Heart right ventricle (tissue), 16 donors: ENCODE measurements at regions of chr10 and their contacts with region 1.

Region 1: GRCh38 chr10:112949875-112950507 is at the start of gene TCF7L2:
- DNase-seq: peak; percentile 94 to 98
- ATAC-seq: peak; percentile 89 to 96 (median 95)
- H3K4me3 ChIP-seq: peak within 1 kb of the TSS; percentile 62 to 90 (median 80)
- H3K27ac ChIP-seq: peak within 1 kb of the TSS; percentile 84 to 97 (median 90)
- H3K4me1 ChIP-seq: peaks cover 4 to 44% (median 18%) of the 10 kb centered on the region in 9 donors
- H3K27me3 ChIP-seq: peaks cover 0 to 22% (median 0%) of the 10 kb centered on the region in 7 donors
- CTCF ChIP-seq: no peak
- total RNA-seq, gene TCF7L2: 9.9 to 15.8 (median 12.0) TPM

Region 2: DNA sequence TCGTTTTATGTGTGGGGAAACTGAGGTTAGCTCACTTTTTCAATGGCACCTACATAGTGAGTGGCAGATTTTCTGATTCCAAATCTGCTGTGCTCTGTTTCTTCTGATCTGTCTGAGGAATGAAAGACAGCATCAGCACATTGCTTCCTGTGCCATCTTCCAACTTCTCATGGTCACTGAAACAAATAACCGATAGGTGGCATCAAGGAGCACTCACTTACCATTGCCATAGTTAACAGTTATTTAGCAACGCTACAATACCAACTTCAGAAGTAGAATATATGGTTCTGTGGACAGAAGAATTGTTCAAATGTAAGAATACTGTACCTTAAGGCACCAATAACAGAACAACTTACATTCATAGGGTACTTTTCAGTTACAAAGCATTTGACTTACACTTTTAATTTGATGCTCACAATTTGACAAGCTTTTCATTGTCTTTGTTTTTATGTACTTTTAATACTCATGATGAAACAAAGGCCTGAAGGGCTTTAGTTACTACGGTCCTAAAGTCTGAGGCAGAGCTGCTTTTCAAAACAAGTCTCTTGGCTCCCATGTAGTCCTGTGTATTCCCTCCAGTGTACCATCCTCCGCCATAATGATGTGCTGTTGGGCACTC is 228.8 kb before region 1 on chr10:
- intact Hi-C with region 1: loop called in 1 of 10 experiments (anchors 10 kb)
- DNase-seq: peak in 1 of 2 donors; percentile 34
- ATAC-seq: peak in 6 of 8 donors; percentile 29 to 59 (median 54)
- H3K4me3 ChIP-seq: no peak overlapping the region
- H3K27ac ChIP-seq: no peak overlapping the region
- H3K4me1 ChIP-seq: peaks cover 0 to 5% (median 0%) of the 10 kb centered on the region in 9 donors
- H3K27me3 ChIP-seq: no peaks in the 10 kb centered on the region
- CTCF ChIP-seq: peak; percentile 39 to 83 (median 71)

Region 3: DNA sequence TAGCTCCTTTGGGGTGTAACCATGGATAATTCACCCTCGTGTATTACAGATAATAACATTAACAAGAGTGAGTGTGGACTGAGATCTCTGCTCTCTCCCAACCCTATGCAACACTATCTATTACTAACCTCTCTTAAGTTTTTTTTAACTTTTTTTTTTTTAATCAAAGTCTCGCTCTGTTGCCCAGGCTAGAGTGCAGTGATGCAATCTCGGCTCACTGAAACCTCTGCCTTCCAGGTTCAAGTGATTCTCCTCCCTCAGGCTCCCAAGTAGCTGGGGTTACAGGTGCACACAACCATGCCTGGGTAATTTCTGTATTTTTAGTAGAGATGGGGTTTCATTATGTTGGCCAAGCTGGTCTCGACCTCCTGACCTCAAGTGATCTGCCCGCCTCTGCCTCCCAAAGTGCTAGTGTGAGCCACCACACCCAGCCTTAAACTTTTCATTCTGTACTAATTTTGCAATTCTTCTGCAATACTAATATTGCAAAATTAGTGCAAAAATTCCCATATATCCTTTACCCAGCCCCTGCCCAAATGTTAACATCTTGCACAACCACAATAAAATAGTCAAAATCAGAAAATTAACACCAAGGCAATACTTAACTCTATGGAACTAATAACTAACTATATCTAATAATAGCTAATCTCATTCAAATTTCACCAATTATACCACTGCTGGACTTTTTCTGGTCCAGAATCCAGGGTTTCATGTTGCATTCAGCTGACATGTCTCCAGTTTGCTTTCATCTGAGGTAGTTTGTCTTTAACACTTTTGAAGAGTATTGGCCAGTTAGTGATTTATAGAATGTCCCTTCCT is 66.4 kb before region 1 on chr10:
- intact Hi-C with region 1: no loop called
- DNase-seq: no peak
- ATAC-seq: no peak
- H3K4me3 ChIP-seq: no peak overlapping the region
- H3K27ac ChIP-seq: no peak overlapping the region
- H3K4me1 ChIP-seq: no peaks in the 10 kb centered on the region
- H3K27me3 ChIP-seq: no peaks in the 10 kb centered on the region
- CTCF ChIP-seq: no peak

Region 4: DNA sequence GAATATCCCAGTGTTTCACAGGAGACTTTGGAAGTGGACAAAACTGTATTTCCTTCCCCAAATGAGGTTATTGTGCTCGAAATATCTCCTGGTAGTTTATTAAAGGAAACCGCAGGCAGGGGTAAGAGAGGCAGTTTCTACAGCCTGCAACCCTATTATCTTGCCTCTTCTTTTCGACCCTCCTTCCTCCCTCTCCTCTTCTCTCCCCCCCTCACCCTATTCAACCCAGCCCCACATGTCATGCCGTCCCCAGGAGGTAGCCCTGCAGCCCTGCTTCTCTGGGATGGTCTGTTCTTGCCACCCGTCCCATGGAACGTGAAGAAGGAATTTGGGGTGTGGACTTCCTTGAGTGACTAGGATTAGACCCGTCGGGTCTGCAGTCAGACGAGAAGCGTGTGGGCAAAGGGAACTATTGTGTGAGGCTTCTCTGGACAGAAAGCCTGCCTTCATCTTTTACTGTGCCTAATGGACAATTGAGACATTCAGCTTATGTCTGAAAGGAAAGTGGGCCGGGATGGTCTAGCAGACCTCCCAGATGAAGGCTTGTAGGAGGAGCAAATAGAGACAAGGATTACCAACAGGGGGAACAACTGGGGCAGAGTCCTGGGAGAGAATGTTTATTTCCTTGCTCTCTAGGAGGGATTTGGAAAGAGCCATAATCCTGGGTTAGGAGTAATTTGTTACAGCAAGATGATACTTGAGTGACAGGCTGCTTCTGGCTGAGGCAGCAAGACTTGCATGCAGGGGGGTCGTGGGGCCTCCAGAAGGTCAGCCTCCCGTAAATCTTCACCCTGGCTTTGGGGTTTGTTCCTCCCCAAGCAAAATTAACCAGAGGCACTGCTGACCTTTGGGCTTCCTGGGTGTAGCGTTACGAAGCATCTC is 77.8 kb after region 1 on chr10:
- intact Hi-C with region 1: loop called in 1 of 10 experiments (anchors 5 kb)
- DNase-seq: no peak
- ATAC-seq: peak; percentile 44 to 65 (median 53)
- H3K4me3 ChIP-seq: peak overlapping the region in 2 of 10 donors; percentile 16 to 26
- H3K27ac ChIP-seq: peak overlapping the region in 8 of 10 donors; percentile 14 to 82 (median 52)
- H3K4me1 ChIP-seq: peaks cover 12 to 52% (median 36%) of the 10 kb centered on the region in 9 donors
- H3K27me3 ChIP-seq: no peaks in the 10 kb centered on the region
- CTCF ChIP-seq: no peak

Region 5: DNA sequence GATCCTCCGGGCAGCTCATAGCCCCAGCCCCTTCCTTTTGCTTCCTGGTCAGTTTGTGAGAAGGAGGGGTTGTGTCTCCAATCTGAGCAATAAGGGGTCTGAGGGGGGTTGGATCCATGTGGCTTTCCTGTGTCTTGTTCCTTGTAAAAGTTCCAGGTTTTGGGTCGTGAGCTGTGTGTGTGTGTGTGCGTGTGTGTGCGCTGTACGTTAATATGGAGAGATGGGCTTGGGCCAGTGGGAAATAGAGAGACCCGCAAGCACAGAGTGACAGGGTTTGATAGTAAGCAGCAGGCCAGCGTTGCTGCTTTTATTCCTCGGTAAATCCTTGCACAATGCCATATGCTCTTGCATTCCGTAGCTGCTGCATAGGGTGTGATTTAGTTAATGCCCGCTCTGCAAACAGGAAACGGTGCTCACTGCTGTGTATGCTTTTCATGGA is 108.6 kb after region 1 on chr10:
- intact Hi-C with region 1: loop called in 7 of 10 experiments (anchors 5 to 10 kb)
- DNase-seq: no peak
- ATAC-seq: peak in 1 of 8 donors; percentile 16
- H3K4me3 ChIP-seq: peak overlapping the region in 1 of 10 donors; percentile 31
- H3K27ac ChIP-seq: peak overlapping the region in 4 of 10 donors; percentile 70 to 86 (median 82)
- H3K4me1 ChIP-seq: peaks cover 10 to 79% (median 55%) of the 10 kb centered on the region in 9 donors
- H3K27me3 ChIP-seq: no peaks in the 10 kb centered on the region
- CTCF ChIP-seq: no peak

Region 6: GRCh38 chr10:113126229-113127201 is 176.5 kb after region 1 on chr10:
- intact Hi-C with region 1: loop called in 7 of 10 experiments (anchors 2 to 10 kb)
- DNase-seq: peak; percentile 55 to 75
- ATAC-seq: peak; percentile 87 to 99 (median 94)
- H3K4me3 ChIP-seq: peak overlapping the region in 8 of 10 donors; percentile 19 to 47 (median 39)
- H3K27ac ChIP-seq: peak overlapping the region in 7 of 10 donors; percentile 5 to 69 (median 28)
- H3K4me1 ChIP-seq: peaks cover 0 to 27% (median 4%) of the 10 kb centered on the region in 9 donors
- H3K27me3 ChIP-seq: peaks cover 0 to 18% (median 0%) of the 10 kb centered on the region in 7 donors
- CTCF ChIP-seq: peak; percentile 54 to 87 (median 75)

Region 7: GRCh38 chr10:113169853-113170460 is 220.0 kb after region 1 on chr10:
- intact Hi-C with region 1: no loop called
- DNase-seq: no peak
- ATAC-seq: no peak
- H3K4me3 ChIP-seq: no peak overlapping the region
- H3K27ac ChIP-seq: no peak overlapping the region
- H3K4me1 ChIP-seq: peaks cover 0 to 9% (median 0%) of the 10 kb centered on the region in 9 donors
- H3K27me3 ChIP-seq: no peaks in the 10 kb centered on the region
- CTCF ChIP-seq: no peak